MCF 10A (cell line): ENCODE measurements at regions of chr14 and their contacts with region 1.

Region 1: GRCh38 chr14:94548999-94549985 is 11.9 kb upstream of the SERPINA4 start:
- DNase-seq: peak; percentile 65
- H3K4me3 Mint-ChIP-seq: no peak overlapping the region
- H3K27ac Mint-ChIP-seq: no peak overlapping the region
- H3K4me1 Mint-ChIP-seq: no peaks in the 10 kb centered on the region
- H3K27me3 Mint-ChIP-seq: no peaks in the 10 kb centered on the region
- CTCF ChIP-seq: peak; percentile 93

Region 2: GRCh38 chr14:94439453-94440057 is 109.7 kb before region 1 on chr14:
- CTCF ChIA-PET with region 1: interaction called, 19 read pairs
- POLR2A ChIA-PET with region 1: no interaction called
- intact Hi-C with region 1: no loop called
- DNase-seq: no peak
- H3K4me3 Mint-ChIP-seq: no peak overlapping the region
- H3K27ac Mint-ChIP-seq: no peak overlapping the region
- H3K4me1 Mint-ChIP-seq: no peaks in the 10 kb centered on the region
- H3K27me3 Mint-ChIP-seq: no peaks in the 10 kb centered on the region
- CTCF ChIP-seq: no peak

Region 3: DNA sequence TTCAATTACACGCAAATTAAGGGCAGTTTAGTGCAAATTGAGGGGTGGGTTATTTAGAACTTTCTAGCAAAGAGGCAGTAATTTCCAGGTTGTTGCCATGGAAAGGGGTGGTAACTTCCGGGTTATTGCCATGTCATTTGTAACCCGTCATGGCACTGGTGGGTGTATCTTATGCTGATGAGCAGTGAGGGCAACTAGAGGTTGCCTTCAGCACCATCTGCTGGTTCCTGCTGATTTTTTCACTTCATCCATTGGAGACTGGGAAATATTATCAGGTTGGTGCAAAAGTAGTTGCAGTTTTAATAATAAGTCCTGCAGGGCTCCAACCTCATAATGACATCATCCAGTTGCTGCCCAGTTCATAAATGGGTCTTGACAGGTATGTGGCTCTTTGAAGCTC is 12.5 kb before region 1 on chr14:
- CTCF ChIA-PET with region 1: interaction called, 37 read pairs
- POLR2A ChIA-PET with region 1: no interaction called
- intact Hi-C with region 1: no loop called
- DNase-seq: peak; percentile 58
- H3K4me3 Mint-ChIP-seq: no peak overlapping the region
- H3K27ac Mint-ChIP-seq: no peak overlapping the region
- H3K4me1 Mint-ChIP-seq: peaks cover 2% of the 10 kb centered on the region
- H3K27me3 Mint-ChIP-seq: no peaks in the 10 kb centered on the region
- CTCF ChIP-seq: no peak

Region 4: DNA sequence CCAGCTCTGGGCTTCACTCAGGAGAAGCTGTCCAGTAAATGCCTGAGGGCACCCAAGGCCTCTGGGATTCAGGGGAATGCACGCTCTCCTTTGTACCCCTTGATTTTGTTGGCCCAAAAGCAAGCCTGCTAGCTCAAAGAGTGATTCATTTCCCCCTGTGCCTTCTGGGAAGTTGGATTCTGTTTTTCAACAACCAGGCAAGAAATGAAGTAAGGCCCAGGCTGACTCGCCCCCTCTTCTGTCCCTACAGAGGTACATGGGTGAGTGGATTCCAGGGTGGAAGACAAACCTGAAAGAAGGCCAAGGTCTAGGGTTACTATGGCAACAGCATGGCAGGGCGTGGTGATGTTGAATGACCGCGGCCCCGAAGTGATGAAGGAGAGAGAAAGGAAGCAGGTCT is 22.7 kb after region 1 on chr14:
- CTCF ChIA-PET with region 1: interaction called, 31 read pairs
- POLR2A ChIA-PET with region 1: interaction called, 3 read pairs
- intact Hi-C with region 1: no loop called
- DNase-seq: peak; percentile 75
- H3K4me3 Mint-ChIP-seq: no peak overlapping the region
- H3K27ac Mint-ChIP-seq: peak overlapping the region; percentile 4
- H3K4me1 Mint-ChIP-seq: peaks cover 8% of the 10 kb centered on the region
- H3K27me3 Mint-ChIP-seq: no peaks in the 10 kb centered on the region
- CTCF ChIP-seq: no peak

Region 5: GRCh38 chr14:94598814-94599652 is 49.7 kb after region 1 on chr14:
- CTCF ChIA-PET with region 1: interaction called, 15 read pairs
- POLR2A ChIA-PET with region 1: interaction called, 3 read pairs
- intact Hi-C with region 1: no loop called
- DNase-seq: peak; percentile 99
- H3K4me3 Mint-ChIP-seq: peak overlapping the region; percentile 17
- H3K27ac Mint-ChIP-seq: peak overlapping the region; percentile 90
- H3K4me1 Mint-ChIP-seq: peaks cover 43% of the 10 kb centered on the region
- H3K27me3 Mint-ChIP-seq: no peaks in the 10 kb centered on the region
- CTCF ChIP-seq: peak; percentile 33